Activated CD8-positive, alpha-beta T cell treated with anti-CD3 and anti-CD28 coated beads, Interleukin-2, amount 10 ng/mL, durations not matched to agents 7 days and 5 days (primary cell): ENCODE measurements at regions of chr5 and their contacts with region 1.

Region 1: GRCh38 chr5:132466433-132467286 is 23.9 kb downstream of the IRF1 start:
- DNase-seq: peak; percentile 90
- ATAC-seq: peak; percentile 82
- H3K4me3 Mint-ChIP-seq: peak overlapping the region; percentile 60
- H3K27ac Mint-ChIP-seq: peak overlapping the region; percentile 92
- H3K4me1 Mint-ChIP-seq: peaks cover 100% of the 10 kb centered on the region
- H3K27me3 Mint-ChIP-seq: no peaks in the 10 kb centered on the region

Region 2: DNA sequence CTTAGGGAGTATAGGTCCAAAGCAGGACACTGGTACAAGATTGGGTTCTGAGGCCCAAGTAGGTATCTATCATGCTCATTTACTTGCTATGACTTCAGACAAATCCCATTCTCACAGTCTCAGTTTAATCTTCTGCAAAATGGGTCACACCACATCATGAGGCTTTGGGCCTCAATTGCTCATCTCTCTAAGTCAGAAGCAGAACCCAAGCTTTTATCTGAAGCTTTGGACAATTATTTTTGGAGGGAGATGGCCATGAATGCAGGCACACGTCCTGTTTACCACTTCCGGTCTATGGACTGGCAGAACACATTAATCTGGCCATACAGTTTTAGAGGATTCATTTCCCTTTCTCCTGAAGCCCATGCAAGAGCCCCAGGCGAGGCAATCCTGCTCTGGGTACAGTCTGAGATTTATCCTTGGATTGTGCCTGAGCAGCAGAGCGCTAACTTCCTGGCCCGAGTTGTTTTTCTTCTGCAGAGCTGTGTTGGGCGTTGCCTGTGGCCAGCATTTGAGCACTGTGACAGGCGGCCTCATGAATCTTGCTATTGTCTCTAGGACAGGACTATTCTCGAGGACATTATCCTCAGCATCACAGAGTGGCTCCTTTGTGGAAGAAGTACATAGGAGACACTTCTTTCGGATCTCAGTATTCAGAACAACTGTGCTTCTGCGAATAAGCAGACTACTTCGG is 156.4 kb before region 1 on chr5:
- CTCF ChIA-PET with region 1: no interaction called
- POLR2A ChIA-PET with region 1: no interaction called
- DNase-seq: no peak
- ATAC-seq: no peak
- H3K4me3 Mint-ChIP-seq: no peak overlapping the region
- H3K27ac Mint-ChIP-seq: no peak overlapping the region
- H3K4me1 Mint-ChIP-seq: no peaks in the 10 kb centered on the region
- H3K27me3 Mint-ChIP-seq: peaks cover 3% of the 10 kb centered on the region

Region 3: DNA sequence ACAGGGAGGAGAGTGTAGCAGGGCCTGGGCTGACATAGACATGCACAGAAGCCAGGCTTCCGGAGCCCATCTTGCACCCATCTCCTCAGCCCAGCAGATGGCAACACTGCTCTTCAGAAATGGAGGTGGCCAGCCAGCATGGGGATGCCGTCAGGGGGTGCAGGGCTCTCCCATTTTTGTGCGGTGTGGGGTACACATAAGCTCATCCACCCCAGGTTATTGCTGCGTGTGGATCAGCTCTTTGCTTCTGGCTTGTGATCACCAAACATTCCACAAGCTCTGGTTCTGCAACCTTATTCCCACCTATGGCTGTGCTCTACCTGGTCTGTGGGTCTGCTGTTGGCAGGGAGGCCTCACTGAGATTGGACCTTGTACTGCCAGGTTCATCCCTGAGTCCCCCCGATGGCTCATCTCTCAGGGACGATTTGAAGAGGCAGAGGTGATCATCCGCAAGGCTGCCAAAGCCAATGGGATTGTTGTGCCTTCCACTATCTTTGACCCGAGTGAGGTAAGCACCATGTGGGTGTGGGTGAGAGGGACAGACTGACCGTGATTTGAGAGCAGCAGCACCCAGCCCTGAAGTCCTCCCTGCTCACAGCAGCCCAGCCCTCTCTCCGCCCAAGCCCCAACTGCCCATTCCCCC is 79.9 kb before region 1 on chr5:
- CTCF ChIA-PET with region 1: interaction called, 18 read pairs
- POLR2A ChIA-PET with region 1: interaction called, 6 read pairs
- DNase-seq: peak; percentile 87
- ATAC-seq: peak; percentile 93
- H3K4me3 Mint-ChIP-seq: no peak overlapping the region
- H3K27ac Mint-ChIP-seq: peak overlapping the region; percentile 51
- H3K4me1 Mint-ChIP-seq: peaks cover 57% of the 10 kb centered on the region
- H3K27me3 Mint-ChIP-seq: no peaks in the 10 kb centered on the region

Region 4: GRCh38 chr5:132419502-132420468 is 46.9 kb before region 1 on chr5:
- CTCF ChIA-PET with region 1: interaction called, 84 read pairs
- POLR2A ChIA-PET with region 1: interaction called, 144 read pairs
- DNase-seq: peak; percentile 76
- ATAC-seq: peak; percentile 64
- H3K4me3 Mint-ChIP-seq: peak overlapping the region; percentile 69
- H3K27ac Mint-ChIP-seq: peak overlapping the region; percentile 91
- H3K4me1 Mint-ChIP-seq: peaks cover 95% of the 10 kb centered on the region
- H3K27me3 Mint-ChIP-seq: no peaks in the 10 kb centered on the region

Region 5: DNA sequence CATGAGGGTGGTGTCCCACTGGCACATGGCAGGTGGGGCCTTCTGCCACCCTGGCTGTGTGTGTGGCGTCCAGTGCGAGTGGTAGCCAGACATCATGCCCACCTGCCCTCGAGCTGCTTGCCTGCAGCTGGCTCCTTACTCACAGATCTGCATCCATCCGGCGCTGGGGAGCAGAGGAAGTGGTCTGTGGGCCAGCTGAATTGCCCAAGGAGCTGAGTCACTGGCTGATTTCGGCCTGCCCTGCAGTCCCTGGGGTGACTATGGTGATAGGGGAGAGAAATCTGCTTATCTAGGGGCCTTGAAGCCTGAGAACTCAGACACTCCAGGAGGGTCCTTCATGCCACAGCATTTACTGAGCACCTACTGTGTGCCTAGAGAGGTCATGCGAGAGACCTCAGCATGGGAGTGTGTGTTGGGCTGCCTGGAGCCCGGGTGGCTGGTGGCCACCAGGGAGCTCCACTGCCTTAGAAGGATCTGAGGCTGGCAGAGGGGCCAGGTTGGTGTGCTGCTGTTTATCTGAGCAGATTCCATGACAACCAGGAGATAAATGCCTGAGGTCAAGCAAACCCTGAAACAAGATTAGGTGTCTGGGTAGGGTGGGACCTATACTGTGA is 40.0 kb before region 1 on chr5:
- CTCF ChIA-PET with region 1: interaction called, 84 read pairs
- POLR2A ChIA-PET with region 1: interaction called, 144 read pairs
- DNase-seq: peak; percentile 85
- ATAC-seq: peak; percentile 59
- H3K4me3 Mint-ChIP-seq: peak overlapping the region; percentile 74
- H3K27ac Mint-ChIP-seq: peak overlapping the region; percentile 98
- H3K4me1 Mint-ChIP-seq: peaks cover 99% of the 10 kb centered on the region
- H3K27me3 Mint-ChIP-seq: no peaks in the 10 kb centered on the region

Region 6: GRCh38 chr5:132437604-132438266 is 28.9 kb before region 1 on chr5:
- CTCF ChIA-PET with region 1: interaction called, 26 read pairs
- POLR2A ChIA-PET with region 1: interaction called, 14 read pairs
- DNase-seq: peak; percentile 84
- ATAC-seq: peak; percentile 94
- H3K4me3 Mint-ChIP-seq: peak overlapping the region; percentile 66
- H3K27ac Mint-ChIP-seq: peak overlapping the region; percentile 83
- H3K4me1 Mint-ChIP-seq: peaks cover 90% of the 10 kb centered on the region
- H3K27me3 Mint-ChIP-seq: no peaks in the 10 kb centered on the region

Region 7: GRCh38 chr5:132495667-132496190 is 29.1 kb after region 1 on chr5:
- CTCF ChIA-PET with region 1: interaction called, 40 read pairs
- POLR2A ChIA-PET with region 1: interaction called, 720 read pairs
- DNase-seq: peak; percentile 87
- ATAC-seq: peak; percentile 59
- H3K4me3 Mint-ChIP-seq: peak overlapping the region; percentile 83
- H3K27ac Mint-ChIP-seq: peak overlapping the region; percentile 95
- H3K4me1 Mint-ChIP-seq: peaks cover 77% of the 10 kb centered on the region
- H3K27me3 Mint-ChIP-seq: no peaks in the 10 kb centered on the region

Region 8: GRCh38 chr5:132500931-132501630 is 34.4 kb after region 1 on chr5:
- CTCF ChIA-PET with region 1: interaction called, 40 read pairs
- POLR2A ChIA-PET with region 1: interaction called, 720 read pairs
- DNase-seq: peak; percentile 85
- ATAC-seq: peak; percentile 25
- H3K4me3 Mint-ChIP-seq: no peak overlapping the region
- H3K27ac Mint-ChIP-seq: peak overlapping the region; percentile 81
- H3K4me1 Mint-ChIP-seq: peaks cover 45% of the 10 kb centered on the region
- H3K27me3 Mint-ChIP-seq: peaks cover 5% of the 10 kb centered on the region

Region 9: DNA sequence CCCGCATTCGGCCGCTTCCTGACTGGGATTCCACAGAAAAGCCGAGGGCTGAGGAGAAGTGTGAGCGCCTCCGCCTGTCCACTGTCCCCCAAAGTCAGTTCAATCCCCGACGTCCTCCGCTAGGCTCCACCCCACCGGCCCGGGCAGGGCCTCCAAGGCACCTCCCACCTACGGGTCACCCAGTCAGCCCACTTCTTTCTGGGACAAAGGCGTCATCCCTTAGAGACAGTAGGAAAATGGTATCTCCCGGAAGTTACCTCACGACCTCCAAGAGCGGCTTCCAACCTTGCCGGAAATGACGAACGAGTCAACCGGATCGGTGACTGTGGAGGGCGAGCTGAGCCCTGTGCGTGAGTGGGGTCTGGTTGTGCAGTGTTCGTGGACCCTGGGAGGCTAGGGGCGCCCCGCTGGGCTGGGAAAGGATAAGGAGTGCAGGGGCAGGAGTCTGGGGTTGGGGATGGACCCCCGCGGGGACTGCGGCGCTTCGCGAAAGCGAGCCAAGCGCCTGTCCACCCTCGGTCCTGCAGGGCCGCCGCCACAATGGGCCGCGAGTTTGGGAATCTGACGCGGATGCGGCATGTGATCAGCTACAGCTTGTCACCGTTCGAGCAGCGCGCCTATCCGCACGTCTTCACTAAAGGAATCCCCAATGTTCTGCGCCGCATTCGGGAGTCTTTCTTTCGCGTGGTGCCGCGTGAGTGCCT is 399.8 kb after region 1 on chr5 and contains the starts of genes GDF9 and UQCRQ:
- CTCF ChIA-PET with region 1: no interaction called
- POLR2A ChIA-PET with region 1: no interaction called
- DNase-seq: peak; percentile 97
- ATAC-seq: peak; percentile 99
- H3K4me3 Mint-ChIP-seq: peak within 1 kb of the TSS; percentile 98
- H3K27ac Mint-ChIP-seq: peak within 1 kb of the TSS; percentile 99
- H3K4me1 Mint-ChIP-seq: peaks cover 23% of the 10 kb centered on the region
- H3K27me3 Mint-ChIP-seq: peaks cover 3% of the 10 kb centered on the region
- total RNA-seq, gene GDF9: 0.52 to 0.92 TPM
- total RNA-seq, gene UQCRQ: 381 to 396 TPM